MCF 10A (cell line): ENCODE measurements at regions of chr1 and their contacts with region 1.

Region 1: GRCh38 chr1:178300352-178300699 is 196.4 kb downstream of the CLEC20A start:
- DNase-seq: no peak
- H3K4me3 Mint-ChIP-seq: no peak overlapping the region
- H3K27ac Mint-ChIP-seq: peak overlapping the region; percentile 50
- H3K4me1 Mint-ChIP-seq: peaks cover 15% of the 10 kb centered on the region
- H3K27me3 Mint-ChIP-seq: no peaks in the 10 kb centered on the region
- CTCF ChIP-seq: no peak

Region 2: GRCh38 chr1:178055779-178056471 is 244.4 kb before region 1 on chr1:
- CTCF ChIA-PET with region 1: interaction called, 15 read pairs
- POLR2A ChIA-PET with region 1: no interaction called
- intact Hi-C with region 1: loop called (anchors 5 kb)
- DNase-seq: peak; percentile 77
- H3K4me3 Mint-ChIP-seq: no peak overlapping the region
- H3K27ac Mint-ChIP-seq: peak overlapping the region; percentile 14
- H3K4me1 Mint-ChIP-seq: peaks cover 50% of the 10 kb centered on the region
- H3K27me3 Mint-ChIP-seq: no peaks in the 10 kb centered on the region
- CTCF ChIP-seq: no peak

Region 3: GRCh38 chr1:178183796-178184195 is 116.5 kb before region 1 on chr1:
- CTCF ChIA-PET with region 1: no interaction called
- POLR2A ChIA-PET with region 1: no interaction called
- intact Hi-C with region 1: no loop called
- DNase-seq: no peak
- H3K4me3 Mint-ChIP-seq: no peak overlapping the region
- H3K27ac Mint-ChIP-seq: no peak overlapping the region
- H3K4me1 Mint-ChIP-seq: peaks cover 29% of the 10 kb centered on the region
- H3K27me3 Mint-ChIP-seq: no peaks in the 10 kb centered on the region
- CTCF ChIP-seq: no peak

Region 4: DNA sequence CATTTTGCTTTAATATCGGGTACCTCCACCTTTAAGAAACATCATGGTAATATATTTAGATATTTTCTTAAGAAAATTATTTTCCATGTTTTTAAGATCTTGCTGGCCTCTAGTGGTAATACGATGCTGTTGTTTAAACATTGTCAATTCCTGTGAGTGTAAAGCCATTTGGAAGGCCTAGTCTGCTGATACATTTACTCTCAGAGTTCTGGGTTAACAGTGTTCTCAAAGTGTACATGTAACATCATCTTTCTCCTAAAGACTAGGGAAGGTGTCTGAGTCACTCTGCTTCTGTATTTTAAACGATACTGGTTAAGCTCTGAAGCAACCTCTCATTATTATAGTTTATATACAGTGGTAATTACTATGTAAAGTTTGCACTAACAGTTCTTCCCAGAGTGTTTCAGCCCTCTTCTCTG is 17.4 kb before region 1 on chr1:
- CTCF ChIA-PET with region 1: interaction called, 41 read pairs
- POLR2A ChIA-PET with region 1: interaction called, 4 read pairs
- intact Hi-C with region 1: no loop called
- DNase-seq: peak; percentile 85
- H3K4me3 Mint-ChIP-seq: no peak overlapping the region
- H3K27ac Mint-ChIP-seq: peak overlapping the region; percentile 28
- H3K4me1 Mint-ChIP-seq: peaks cover 38% of the 10 kb centered on the region
- H3K27me3 Mint-ChIP-seq: no peaks in the 10 kb centered on the region
- CTCF ChIP-seq: peak; percentile 77

Region 5: GRCh38 chr1:178324003-178324402 is 23.7 kb after region 1 on chr1:
- CTCF ChIA-PET with region 1: interaction called, 17 read pairs
- POLR2A ChIA-PET with region 1: no interaction called
- intact Hi-C with region 1: no loop called
- DNase-seq: peak; percentile 44
- H3K4me3 Mint-ChIP-seq: no peak overlapping the region
- H3K27ac Mint-ChIP-seq: no peak overlapping the region
- H3K4me1 Mint-ChIP-seq: peaks cover 19% of the 10 kb centered on the region
- H3K27me3 Mint-ChIP-seq: no peaks in the 10 kb centered on the region
- CTCF ChIP-seq: no peak

Region 6: DNA sequence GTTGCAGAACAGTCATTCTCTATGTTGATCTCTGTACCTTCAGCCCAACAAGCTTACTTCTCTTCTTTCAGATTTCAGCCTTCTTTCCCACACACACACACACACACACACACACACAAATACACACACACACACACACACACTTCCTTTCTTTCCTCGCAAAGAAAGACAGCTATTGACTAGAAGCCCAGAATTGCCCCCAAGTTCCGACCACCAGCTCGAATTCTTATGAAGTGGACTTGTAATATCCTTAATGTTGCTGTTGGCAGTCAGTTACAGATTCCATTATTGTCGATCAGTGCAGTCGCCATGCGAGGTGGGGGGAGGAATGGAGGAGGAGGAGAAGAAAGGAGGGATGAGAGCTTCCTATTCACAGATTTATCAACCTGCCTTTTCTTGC is 70.9 kb after region 1 on chr1:
- CTCF ChIA-PET with region 1: interaction called, 10 read pairs
- POLR2A ChIA-PET with region 1: no interaction called
- intact Hi-C with region 1: no loop called
- DNase-seq: no peak
- H3K4me3 Mint-ChIP-seq: no peak overlapping the region
- H3K27ac Mint-ChIP-seq: no peak overlapping the region
- H3K4me1 Mint-ChIP-seq: no peaks in the 10 kb centered on the region
- H3K27me3 Mint-ChIP-seq: no peaks in the 10 kb centered on the region
- CTCF ChIP-seq: no peak

Region 7: GRCh38 chr1:178470411-178470960 is 170.2 kb after region 1 on chr1:
- CTCF ChIA-PET with region 1: interaction called, 11 read pairs
- POLR2A ChIA-PET with region 1: interaction called, 3 read pairs
- intact Hi-C with region 1: no loop called
- DNase-seq: peak; percentile 54
- H3K4me3 Mint-ChIP-seq: no peak overlapping the region
- H3K27ac Mint-ChIP-seq: peak overlapping the region; percentile 85
- H3K4me1 Mint-ChIP-seq: peaks cover 18% of the 10 kb centered on the region
- H3K27me3 Mint-ChIP-seq: no peaks in the 10 kb centered on the region
- CTCF ChIP-seq: no peak

Region 8: GRCh38 chr1:178532392-178532791 is 232.1 kb after region 1 on chr1:
- CTCF ChIA-PET with region 1: interaction called, 82 read pairs
- POLR2A ChIA-PET with region 1: interaction called, 4 read pairs
- intact Hi-C with region 1: no loop called
- DNase-seq: peak; percentile 88
- H3K4me3 Mint-ChIP-seq: no peak overlapping the region
- H3K27ac Mint-ChIP-seq: no peak overlapping the region
- H3K4me1 Mint-ChIP-seq: peaks cover 36% of the 10 kb centered on the region
- H3K27me3 Mint-ChIP-seq: peaks cover 7% of the 10 kb centered on the region
- CTCF ChIP-seq: peak; percentile 99